ENCODE measurements at regions of chr4 and their contacts with region 1.

Region 1: GRCh38 chr4:37452952-37453280 is 208.4 kb downstream of the NWD2 start:
- DNase-seq: no peak
- ATAC-seq: peak; percentile 56 to 89 (median 74)
- H3K4me3 ChIP-seq: peak overlapping the region; percentile 67
- H3K27ac ChIP-seq: no peak overlapping the region
- H3K4me1 ChIP-seq: peaks cover 5% of the 10 kb centered on the region
- H3K27me3 ChIP-seq: peaks cover 4 to 55% (median 8%) of the 10 kb centered on the region in 3 donors
- CTCF ChIP-seq: peak; percentile 37

Region 2: DNA sequence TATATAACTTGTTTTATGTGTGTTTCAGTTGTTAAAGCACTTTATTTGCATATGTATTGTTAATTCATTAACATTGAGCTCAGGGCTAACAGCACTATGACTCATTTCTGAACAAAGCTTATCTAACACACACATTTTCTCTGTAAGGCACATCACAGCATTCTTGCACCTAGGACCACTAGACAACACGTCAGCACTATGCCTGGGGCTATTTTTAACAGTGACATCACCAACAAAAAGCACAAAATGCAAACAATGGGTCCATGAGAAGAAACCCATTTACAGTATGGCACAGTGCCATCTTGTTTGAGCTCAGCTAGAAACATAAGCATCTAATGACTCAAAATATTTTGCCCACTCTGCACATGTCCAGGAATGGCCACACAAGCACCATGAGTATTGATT is 108.9 kb after region 1 on chr4:
- intact Hi-C with region 1: loop called (anchors 1 to 5 kb)
- DNase-seq: no peak
- ATAC-seq: no peak
- H3K4me3 ChIP-seq: no peak overlapping the region
- H3K27ac ChIP-seq: no peak overlapping the region
- H3K4me1 ChIP-seq: no peaks in the 10 kb centered on the region
- H3K27me3 ChIP-seq: no peaks in the 10 kb centered on the region
- CTCF ChIP-seq: no peak

Region 3: GRCh38 chr4:37568481-37568880 is 115.6 kb after region 1 on chr4:
- intact Hi-C with region 1: loop called (anchors 1 to 5 kb)
- DNase-seq: no peak
- ATAC-seq: no peak
- H3K4me3 ChIP-seq: no peak overlapping the region
- H3K27ac ChIP-seq: no peak overlapping the region
- H3K4me1 ChIP-seq: no peaks in the 10 kb centered on the region
- H3K27me3 ChIP-seq: no peaks in the 10 kb centered on the region
- CTCF ChIP-seq: no peak

Region 4: GRCh38 chr4:37793562-37793961 is 340.6 kb after region 1 on chr4:
- intact Hi-C with region 1: loop called in 1 of 2 experiments (anchors 10 kb)
- DNase-seq: no peak
- ATAC-seq: peak; percentile 62 to 82 (median 75)
- H3K4me3 ChIP-seq: no peak overlapping the region
- H3K27ac ChIP-seq: no peak overlapping the region
- H3K4me1 ChIP-seq: peaks cover 6% of the 10 kb centered on the region
- H3K27me3 ChIP-seq: no peaks in the 10 kb centered on the region
- CTCF ChIP-seq: peak; percentile 57